Activated CD4-positive, alpha-beta T cell treated with anti-CD3 and anti-CD28 coated beads, Interleukin-2, amount 10 ng/mL, durations not matched to agents 24 days and 14 days (primary cell): ENCODE measurements at regions of chr3 and their contacts with region 1.

Region 1: DNA sequence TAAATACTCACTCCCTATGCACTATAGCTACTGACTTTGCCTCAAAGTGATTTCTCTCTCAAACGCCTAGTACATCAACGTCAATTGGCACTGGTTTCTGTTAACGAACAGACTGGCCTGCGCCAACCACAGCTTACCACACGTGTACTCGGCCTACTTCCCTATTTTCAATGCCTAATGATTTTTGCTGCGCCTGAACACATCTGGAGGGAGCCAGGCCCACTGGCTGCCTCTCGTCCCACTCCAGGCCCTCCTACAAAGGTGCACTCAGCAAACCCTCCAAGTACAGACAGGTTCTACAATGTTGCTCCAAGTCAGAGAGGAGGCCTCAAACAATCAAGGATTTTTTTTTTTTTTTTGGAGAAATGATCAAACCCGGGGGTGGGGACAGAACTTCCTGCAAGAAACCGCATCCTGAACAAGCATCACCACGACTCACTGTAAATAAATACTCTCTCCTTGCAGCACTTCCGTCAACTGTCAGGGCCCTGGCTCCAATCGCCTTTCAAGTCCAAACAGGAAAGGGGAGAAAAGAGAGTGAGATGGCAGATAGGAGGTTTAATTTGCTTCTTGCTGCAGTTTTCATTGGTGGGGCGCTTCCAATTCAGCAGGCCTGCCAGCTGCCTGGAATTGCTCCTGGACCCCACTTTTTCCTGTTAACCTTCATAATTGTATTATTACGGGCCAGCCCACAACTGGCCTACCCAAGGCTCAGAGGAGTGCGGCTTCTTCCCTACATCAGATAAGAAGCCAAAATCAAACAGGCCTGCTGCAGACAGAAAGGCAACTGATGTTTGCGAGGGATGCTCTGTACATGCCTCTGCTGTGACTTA is 139.3 kb downstream of the FOXP1 start:
- DNase-seq: peak; percentile 93
- H3K4me3 Mint-ChIP-seq: peak overlapping the region; percentile 76
- H3K27ac Mint-ChIP-seq: peak overlapping the region; percentile 99
- H3K4me1 Mint-ChIP-seq: peaks cover 80% of the 10 kb centered on the region
- H3K27me3 Mint-ChIP-seq: no peaks in the 10 kb centered on the region

Region 2: GRCh38 chr3:71069797-71070196 is 374.4 kb before region 1 on chr3:
- intact Hi-C with region 1: loop called (anchors 5 kb)
- DNase-seq: peak; percentile 89
- H3K4me3 Mint-ChIP-seq: no peak overlapping the region
- H3K27ac Mint-ChIP-seq: no peak overlapping the region
- H3K4me1 Mint-ChIP-seq: peaks cover 57% of the 10 kb centered on the region
- H3K27me3 Mint-ChIP-seq: no peaks in the 10 kb centered on the region

Region 3: GRCh38 chr3:71397046-71397445 is 47.2 kb before region 1 on chr3:
- intact Hi-C with region 1: loop called (anchors 2 kb)
- DNase-seq: no peak
- H3K4me3 Mint-ChIP-seq: no peak overlapping the region
- H3K27ac Mint-ChIP-seq: no peak overlapping the region
- H3K4me1 Mint-ChIP-seq: peaks cover 22% of the 10 kb centered on the region
- H3K27me3 Mint-ChIP-seq: peaks cover 35% of the 10 kb centered on the region

Region 4: GRCh38 chr3:71423151-71423906 is 20.9 kb before region 1 on chr3:
- intact Hi-C with region 1: loop called (anchors 1 kb)
- DNase-seq: no peak
- H3K4me3 Mint-ChIP-seq: no peak overlapping the region
- H3K27ac Mint-ChIP-seq: no peak overlapping the region
- H3K4me1 Mint-ChIP-seq: peaks cover 38% of the 10 kb centered on the region
- H3K27me3 Mint-ChIP-seq: peaks cover 34% of the 10 kb centered on the region

Region 5: DNA sequence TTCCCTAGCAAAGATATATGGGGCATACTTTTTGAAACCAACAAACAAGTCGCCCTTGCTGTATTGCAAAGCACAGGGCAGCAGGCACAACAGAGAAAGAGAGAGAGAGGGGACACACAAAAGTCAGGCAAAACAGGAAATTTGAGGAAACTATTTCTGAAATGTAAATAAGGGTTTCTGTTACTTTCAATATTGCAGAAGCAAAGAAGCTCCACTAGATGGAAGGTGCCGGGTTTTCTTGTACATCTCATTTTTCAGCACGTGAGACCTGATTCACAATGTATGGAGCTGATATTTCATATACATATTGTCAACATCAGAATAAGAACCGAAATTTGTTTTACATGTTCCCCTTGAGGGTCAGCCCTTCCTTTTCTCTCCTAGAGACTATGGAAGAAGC is 11.9 kb after region 1 on chr3:
- intact Hi-C with region 1: loop called (anchors 1 kb)
- DNase-seq: peak; percentile 70
- H3K4me3 Mint-ChIP-seq: peak overlapping the region; percentile 53
- H3K27ac Mint-ChIP-seq: peak overlapping the region; percentile 60
- H3K4me1 Mint-ChIP-seq: peaks cover 59% of the 10 kb centered on the region
- H3K27me3 Mint-ChIP-seq: peaks cover 10% of the 10 kb centered on the region

Region 6: GRCh38 chr3:71495708-71496472 is 51.6 kb after region 1 on chr3:
- intact Hi-C with region 1: loop called (anchors 2 kb)
- DNase-seq: peak; percentile 77
- H3K4me3 Mint-ChIP-seq: peak overlapping the region; percentile 71
- H3K27ac Mint-ChIP-seq: peak overlapping the region; percentile 81
- H3K4me1 Mint-ChIP-seq: peaks cover 50% of the 10 kb centered on the region
- H3K27me3 Mint-ChIP-seq: peaks cover 4% of the 10 kb centered on the region